MCF 10A (cell line): ENCODE measurements at regions of chr6 and their contacts with region 1.

Region 1: GRCh38 chr6:48135342-48136084 is 24.5 kb upstream of the PTCHD4 start:
- DNase-seq: peak; percentile 86
- H3K4me3 Mint-ChIP-seq: peak overlapping the region; percentile 25
- H3K27ac Mint-ChIP-seq: peak overlapping the region; percentile 78
- H3K4me1 Mint-ChIP-seq: peaks cover 60% of the 10 kb centered on the region
- H3K27me3 Mint-ChIP-seq: no peaks in the 10 kb centered on the region
- CTCF ChIP-seq: no peak

Region 2: DNA sequence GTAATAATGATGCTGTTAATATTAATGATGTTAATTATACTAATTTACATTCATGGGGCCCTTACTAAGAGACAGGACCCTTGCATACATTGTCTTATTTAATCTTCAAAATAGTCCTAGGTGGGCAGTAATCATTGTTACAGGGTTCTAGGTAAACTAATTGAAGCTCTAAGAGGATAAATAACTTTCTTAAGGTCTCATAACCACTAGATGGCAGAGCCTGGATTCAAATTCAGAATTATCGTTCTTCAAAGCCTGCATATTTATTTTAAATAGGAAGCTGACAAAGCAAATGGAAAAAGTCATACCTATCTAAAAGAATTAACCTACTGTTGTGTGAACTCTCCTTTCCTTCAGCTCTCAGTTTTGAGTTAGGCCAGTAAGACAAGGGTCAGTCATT is 48.1 kb before region 1 on chr6:
- CTCF ChIA-PET with region 1: no interaction called
- POLR2A ChIA-PET with region 1: no interaction called
- intact Hi-C with region 1: no loop called
- DNase-seq: peak; percentile 43
- H3K4me3 Mint-ChIP-seq: no peak overlapping the region
- H3K27ac Mint-ChIP-seq: no peak overlapping the region
- H3K4me1 Mint-ChIP-seq: no peaks in the 10 kb centered on the region
- H3K27me3 Mint-ChIP-seq: no peaks in the 10 kb centered on the region
- CTCF ChIP-seq: peak; percentile 42

Region 3: DNA sequence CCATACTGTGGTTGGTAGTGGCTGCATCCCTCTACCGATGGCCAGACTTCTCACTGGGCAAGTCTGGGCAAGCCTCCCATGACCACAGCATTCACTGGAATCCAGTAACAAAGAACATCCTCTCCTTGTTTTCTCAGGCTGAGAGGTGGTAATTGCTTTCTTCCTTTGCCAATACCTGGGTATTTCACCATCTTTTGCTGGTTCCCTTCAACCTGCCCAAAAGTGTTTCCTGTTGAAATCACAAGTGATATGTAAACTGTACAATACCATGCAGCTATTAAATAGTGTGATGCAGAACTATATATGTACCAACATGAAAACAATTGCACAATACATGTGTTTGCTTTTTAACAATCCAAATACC is 24.4 kb before region 1 on chr6 and contains the start of gene PTCHD4:
- CTCF ChIA-PET with region 1: no interaction called
- POLR2A ChIA-PET with region 1: interaction called, 9 read pairs
- intact Hi-C with region 1: loop called (anchors 2 kb)
- DNase-seq: peak; percentile 98
- H3K4me3 Mint-ChIP-seq: peak within 1 kb of the TSS; percentile 97
- H3K27ac Mint-ChIP-seq: peak within 1 kb of the TSS; percentile 98
- H3K4me1 Mint-ChIP-seq: peaks cover 15% of the 10 kb centered on the region
- H3K27me3 Mint-ChIP-seq: no peaks in the 10 kb centered on the region
- CTCF ChIP-seq: no peak
- total RNA-seq, gene PTCHD4: 7.4 and 8.4 TPM in 2 replicates